Activated naive CD4-positive, alpha-beta T cell treated with anti-CD3 and anti-CD28 coated beads for 36 hours (primary cell): ENCODE measurements at regions of chr2 and their contacts with region 1.

Region 1: DNA sequence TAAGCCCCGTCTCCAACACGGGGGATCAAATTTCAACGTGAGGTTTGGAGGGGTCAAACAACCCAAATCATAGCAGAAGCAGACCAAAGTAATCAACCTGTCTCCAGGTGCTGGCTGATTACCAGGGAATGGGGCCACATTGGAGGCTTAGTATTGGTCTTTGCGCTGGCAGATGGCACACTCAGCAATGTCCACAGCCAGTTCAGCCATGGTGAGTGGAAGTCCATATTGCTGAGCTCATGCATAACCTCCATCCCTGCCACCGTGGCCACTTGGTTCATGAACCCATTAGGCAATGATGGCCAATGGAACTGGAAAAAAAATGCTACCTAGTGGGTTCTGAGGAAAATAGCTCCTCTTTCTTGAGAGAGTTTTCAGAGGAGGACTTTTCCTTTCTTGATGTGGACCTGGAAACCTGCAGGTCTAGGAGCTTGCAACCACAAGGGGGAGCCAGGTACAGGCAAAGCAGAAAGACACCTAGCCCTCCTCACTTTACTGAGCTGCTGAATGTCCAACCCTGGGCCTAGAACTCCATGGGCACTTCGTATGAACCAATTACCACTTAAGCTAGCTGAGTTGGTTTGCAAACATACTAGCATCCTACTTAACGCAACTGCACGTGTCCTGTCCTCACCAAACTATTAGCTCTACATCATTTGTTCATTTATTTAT is 128.0 kb upstream of the GYPC start:
- DNase-seq: peak; percentile 83
- H3K4me3 Mint-ChIP-seq: no peak overlapping the region
- H3K27ac Mint-ChIP-seq: no peak overlapping the region
- H3K4me1 Mint-ChIP-seq: no peaks in the 10 kb centered on the region
- H3K27me3 Mint-ChIP-seq: no peaks in the 10 kb centered on the region

Region 2: DNA sequence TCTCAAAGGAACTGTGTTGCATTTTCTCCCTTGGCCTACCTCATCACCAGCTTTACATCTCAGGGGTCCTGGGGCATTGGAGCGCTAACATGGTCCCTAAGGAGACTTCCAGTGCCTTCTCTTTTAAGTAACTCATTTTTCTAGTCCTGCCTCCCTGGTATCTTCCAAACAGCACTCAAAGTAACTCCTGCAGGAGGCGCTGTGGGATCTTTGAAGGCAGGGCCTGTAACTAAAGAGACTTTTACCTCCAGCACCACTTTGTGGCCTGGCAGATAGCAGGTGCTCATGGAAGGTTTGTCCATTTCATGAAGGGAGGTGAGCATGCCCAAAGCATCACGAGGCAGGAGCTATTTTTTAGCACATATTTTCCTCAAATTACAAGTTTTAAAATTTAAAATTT is 283.0 kb before region 1 on chr2:
- CTCF ChIA-PET with region 1: interaction called, 3 read pairs
- intact Hi-C with region 1: loop called (anchors 2 kb)
- DNase-seq: peak; percentile 81
- H3K4me3 Mint-ChIP-seq: no peak overlapping the region
- H3K27ac Mint-ChIP-seq: no peak overlapping the region
- H3K4me1 Mint-ChIP-seq: no peaks in the 10 kb centered on the region
- H3K27me3 Mint-ChIP-seq: peaks cover 8% of the 10 kb centered on the region

Region 3: GRCh38 chr2:126657636-126658318 is 129.8 kb after region 1 on chr2:
- CTCF ChIA-PET with region 1: interaction called, 3 read pairs
- intact Hi-C with region 1: loop called (anchors 2 kb)
- DNase-seq: peak; percentile 87
- H3K4me3 Mint-ChIP-seq: peak overlapping the region; percentile 100
- H3K27ac Mint-ChIP-seq: peak overlapping the region; percentile 100
- H3K4me1 Mint-ChIP-seq: peaks cover 61% of the 10 kb centered on the region
- H3K27me3 Mint-ChIP-seq: no peaks in the 10 kb centered on the region

Region 4: DNA sequence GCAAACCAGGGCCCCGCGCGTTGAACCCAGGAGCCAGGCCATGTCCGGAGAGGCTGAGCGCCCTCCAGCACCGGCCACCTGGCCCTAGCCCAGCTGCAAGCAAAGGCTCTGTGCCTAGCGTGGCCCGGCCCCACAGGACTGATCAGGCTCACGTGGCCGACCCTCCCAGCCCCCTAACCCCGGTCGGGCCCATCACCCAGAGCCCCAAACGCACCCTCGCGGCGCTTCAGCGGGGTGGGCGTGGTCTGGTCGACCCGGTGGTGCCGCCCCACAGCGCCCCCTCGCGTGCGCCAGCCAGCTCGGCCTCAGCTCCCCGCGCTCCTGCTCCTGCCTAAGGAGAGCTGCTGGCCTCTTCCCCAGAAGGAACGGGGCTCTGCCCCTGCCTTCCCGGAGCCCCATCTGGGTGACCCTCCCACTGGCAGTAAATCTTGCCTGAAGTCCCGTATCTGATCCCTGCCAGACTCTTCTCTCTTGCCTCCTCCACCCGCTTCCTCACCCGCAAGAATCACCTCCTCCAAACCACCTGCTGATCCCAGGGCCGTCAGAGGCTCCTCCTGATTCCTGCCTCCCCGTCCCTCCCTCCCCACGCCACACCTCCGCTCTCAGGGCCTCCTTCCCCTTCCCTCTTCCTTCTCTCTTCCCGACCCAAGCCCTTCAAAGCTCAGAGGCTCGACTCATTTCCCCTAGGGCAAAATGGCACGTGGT is 358.4 kb after region 1 on chr2:
- CTCF ChIA-PET with region 1: no interaction called
- intact Hi-C with region 1: loop called (anchors 2 kb)
- DNase-seq: peak; percentile 70
- H3K4me3 Mint-ChIP-seq: no peak overlapping the region
- H3K27ac Mint-ChIP-seq: no peak overlapping the region
- H3K4me1 Mint-ChIP-seq: peaks cover 2% of the 10 kb centered on the region
- H3K27me3 Mint-ChIP-seq: peaks cover 13% of the 10 kb centered on the region

Region 5: DNA sequence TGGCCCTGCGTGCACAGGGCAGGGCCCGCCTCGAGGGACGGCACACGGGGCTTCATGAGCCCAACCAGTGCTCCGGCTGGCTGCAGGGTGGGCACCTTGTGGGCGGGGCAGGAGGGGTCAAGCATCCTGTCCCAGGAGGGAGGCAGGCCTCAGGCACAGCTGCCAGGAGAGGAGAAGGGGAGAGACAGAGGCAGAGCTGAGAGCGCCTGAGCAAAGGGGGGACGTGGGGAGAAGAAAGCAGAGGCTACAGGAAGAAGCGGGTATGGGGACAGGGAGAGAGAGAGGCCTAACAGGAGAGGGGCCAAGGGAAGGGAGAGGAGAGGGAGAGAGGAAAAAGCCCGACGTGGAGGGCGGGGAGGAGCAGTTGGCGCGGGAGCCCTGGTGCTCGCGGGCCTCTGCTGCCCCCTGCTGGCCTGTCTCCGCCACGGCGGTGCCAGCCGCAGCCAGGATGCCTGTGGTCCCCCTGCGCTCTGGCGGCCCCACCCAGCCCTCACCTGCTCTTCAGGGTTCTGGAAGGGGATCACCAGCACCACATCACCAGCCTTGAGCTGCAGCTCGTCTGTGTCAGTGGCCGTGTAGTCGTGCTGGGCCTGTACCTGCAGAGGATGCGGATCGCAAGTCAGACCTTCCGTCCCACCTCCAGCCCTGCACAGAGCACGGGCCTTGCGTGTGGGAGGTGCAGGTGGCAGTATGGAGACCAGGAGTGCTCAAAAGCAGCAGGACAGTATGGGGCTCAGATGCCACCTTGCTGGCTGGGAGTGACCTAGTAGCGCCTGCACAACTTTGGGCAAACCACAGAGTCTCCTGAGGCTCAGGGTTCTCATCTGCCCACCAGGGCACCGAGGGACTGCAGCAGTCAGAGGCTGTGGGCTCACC is 522.2 kb after region 1 on chr2:
- CTCF ChIA-PET with region 1: no interaction called
- intact Hi-C with region 1: loop called (anchors 1 kb)
- DNase-seq: peak; percentile 67
- H3K4me3 Mint-ChIP-seq: no peak overlapping the region
- H3K27ac Mint-ChIP-seq: no peak overlapping the region
- H3K4me1 Mint-ChIP-seq: peaks cover 3% of the 10 kb centered on the region
- H3K27me3 Mint-ChIP-seq: no peaks in the 10 kb centered on the region